K562 (cell line): ENCODE measurements at regions of chr7 and their contacts with region 1.

Region 1: DNA sequence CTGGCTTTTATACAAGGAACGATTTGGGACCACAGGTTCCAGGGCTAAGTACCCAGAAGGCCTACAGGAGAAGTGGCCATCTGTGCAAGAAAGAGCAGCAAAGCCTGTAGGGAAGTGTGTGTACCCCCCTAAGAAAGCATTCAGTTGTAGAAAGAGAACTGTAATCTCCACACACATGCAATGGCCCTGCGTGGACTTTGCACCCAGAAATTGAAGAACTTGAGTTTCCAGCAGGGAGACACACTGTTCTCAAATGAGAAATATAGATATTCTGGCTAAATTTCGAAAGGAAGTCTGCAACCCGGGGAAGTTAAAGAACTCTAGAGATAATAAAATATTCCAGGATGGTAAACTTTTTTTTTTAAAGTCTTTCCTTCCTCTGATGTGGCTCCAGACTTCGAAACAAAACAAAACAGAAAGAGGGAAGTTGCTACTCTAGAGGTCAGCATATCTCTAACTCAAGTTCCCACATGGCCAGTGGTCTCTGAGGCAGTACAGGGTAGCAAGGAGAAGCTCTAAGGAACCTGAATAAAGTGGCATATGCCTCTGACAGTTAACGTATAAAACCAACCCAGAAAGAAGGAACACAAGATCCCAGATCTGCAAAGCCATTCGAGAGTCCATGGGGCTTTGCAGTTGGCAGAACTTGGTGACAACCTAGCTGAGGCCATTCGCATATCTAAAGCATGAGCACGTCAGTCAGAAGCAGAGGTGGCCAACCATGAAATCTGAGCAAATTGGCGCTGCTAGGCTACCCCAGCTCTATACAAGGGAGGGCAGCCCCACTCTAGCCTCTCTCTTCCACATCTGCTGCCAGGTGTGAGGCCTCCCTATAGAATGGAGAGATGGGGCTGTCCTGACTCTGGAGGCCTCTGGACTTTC is 56.6 kb downstream of the ELMO1 start:
- DNase-seq: no peak
- ATAC-seq: no peak
- H3K4me3 ChIP-seq: no peak overlapping the region
- H3K27ac ChIP-seq: no peak overlapping the region
- H3K4me1 ChIP-seq: no peaks in the 10 kb centered on the region
- H3K27me3 ChIP-seq: no peaks in the 10 kb centered on the region; a peak in 1 of 5 replicates
- CTCF ChIP-seq: no peak
- EP300 ChIP-seq: no peak
- POLR2A ChIP-seq: no peak
- RAD21 ChIP-seq: no peak

Region 2: GRCh38 chr7:37323966-37324365 is 68.1 kb before region 1 on chr7:
- CTCF ChIA-PET with region 1: no interaction called
- POLR2A ChIA-PET with region 1: no interaction called
- in situ Hi-C with region 1: no loop called
- intact Hi-C with region 1: no loop called
- DNase-seq: no peak
- ATAC-seq: no peak
- H3K4me3 ChIP-seq: no peak overlapping the region
- H3K27ac ChIP-seq: no peak overlapping the region
- H3K4me1 ChIP-seq: no peaks in the 10 kb centered on the region
- H3K27me3 ChIP-seq: peaks cover 0 to 9% of the 10 kb centered on the region in 2 experiments; a peak in 1 of 5 replicates
- CTCF ChIP-seq: no peak
- EP300 ChIP-seq: no peak
- POLR2A ChIP-seq: no peak
- RAD21 ChIP-seq: no peak

Region 3: GRCh38 chr7:39016604-39017003 is 1624.6 kb after region 1 on chr7:
- CTCF ChIA-PET with region 1: no interaction called
- POLR2A ChIA-PET with region 1: no interaction called
- in situ Hi-C with region 1: loop called (anchors 25 kb)
- intact Hi-C with region 1: no loop called
- DNase-seq: no peak
- ATAC-seq: no peak
- H3K4me3 ChIP-seq: no peak overlapping the region
- H3K27ac ChIP-seq: no peak overlapping the region
- H3K4me1 ChIP-seq: peaks cover 0 to 3% of the 10 kb centered on the region in 2 experiments; a peak in 1 of 5 replicates
- H3K27me3 ChIP-seq: no peaks in the 10 kb centered on the region
- CTCF ChIP-seq: no peak
- EP300 ChIP-seq: no peak
- POLR2A ChIP-seq: no peak
- RAD21 ChIP-seq: no peak